Heart right ventricle (tissue), 16 donors: ENCODE measurements at regions of chr10 and their contacts with region 1.

Region 1: GRCh38 chr10:89481662-89482061 is 53.7 kb downstream of the SLC16A12 start:
- DNase-seq: no peak
- ATAC-seq: peak in 7 of 8 donors; percentile 30 to 75 (median 66)
- H3K4me3 ChIP-seq: no peak overlapping the region
- H3K27ac ChIP-seq: peak overlapping the region; percentile 19 to 86 (median 78)
- H3K4me1 ChIP-seq: peaks cover 18 to 69% (median 45%) of the 10 kb centered on the region in 9 donors
- H3K27me3 ChIP-seq: no peaks in the 10 kb centered on the region
- CTCF ChIP-seq: no peak

Region 2: GRCh38 chr10:89241486-89242344 is 239.9 kb before region 1 on chr10:
- intact Hi-C with region 1: no loop called
- DNase-seq: no peak
- ATAC-seq: peak in 5 of 8 donors; percentile 56 to 75 (median 69)
- H3K4me3 ChIP-seq: no peak overlapping the region
- H3K27ac ChIP-seq: peak overlapping the region in 3 of 10 donors; percentile 30 to 76 (median 41)
- H3K4me1 ChIP-seq: peaks cover 0 to 58% (median 23%) of the 10 kb centered on the region in 9 donors
- H3K27me3 ChIP-seq: no peaks in the 10 kb centered on the region
- CTCF ChIP-seq: no peak

Region 3: GRCh38 chr10:89426230-89426868 is 55.3 kb before region 1 on chr10:
- intact Hi-C with region 1: loop called in 2 of 10 experiments (anchors 5 kb)
- DNase-seq: peak in 1 of 2 donors; percentile 44
- ATAC-seq: peak; percentile 50 to 87 (median 78)
- H3K4me3 ChIP-seq: no peak overlapping the region
- H3K27ac ChIP-seq: no peak overlapping the region
- H3K4me1 ChIP-seq: peaks cover 0 to 36% (median 4%) of the 10 kb centered on the region in 9 donors
- H3K27me3 ChIP-seq: no peaks in the 10 kb centered on the region
- CTCF ChIP-seq: peak; percentile 76 to 90 (median 84)

Region 4: GRCh38 chr10:89431977-89432376 is 49.7 kb before region 1 on chr10:
- intact Hi-C with region 1: loop called in 2 of 10 experiments (anchors 5 kb)
- DNase-seq: no peak
- ATAC-seq: peak in 5 of 8 donors; percentile 23 to 74 (median 30)
- H3K4me3 ChIP-seq: peak overlapping the region in 1 of 10 donors; percentile 6
- H3K27ac ChIP-seq: peak overlapping the region in 5 of 10 donors; percentile 7 to 36 (median 22)
- H3K4me1 ChIP-seq: peaks cover 0 to 42% (median 6%) of the 10 kb centered on the region in 9 donors
- H3K27me3 ChIP-seq: peaks cover 0 to 4% (median 0%) of the 10 kb centered on the region in 7 donors
- CTCF ChIP-seq: no peak

Region 5: DNA sequence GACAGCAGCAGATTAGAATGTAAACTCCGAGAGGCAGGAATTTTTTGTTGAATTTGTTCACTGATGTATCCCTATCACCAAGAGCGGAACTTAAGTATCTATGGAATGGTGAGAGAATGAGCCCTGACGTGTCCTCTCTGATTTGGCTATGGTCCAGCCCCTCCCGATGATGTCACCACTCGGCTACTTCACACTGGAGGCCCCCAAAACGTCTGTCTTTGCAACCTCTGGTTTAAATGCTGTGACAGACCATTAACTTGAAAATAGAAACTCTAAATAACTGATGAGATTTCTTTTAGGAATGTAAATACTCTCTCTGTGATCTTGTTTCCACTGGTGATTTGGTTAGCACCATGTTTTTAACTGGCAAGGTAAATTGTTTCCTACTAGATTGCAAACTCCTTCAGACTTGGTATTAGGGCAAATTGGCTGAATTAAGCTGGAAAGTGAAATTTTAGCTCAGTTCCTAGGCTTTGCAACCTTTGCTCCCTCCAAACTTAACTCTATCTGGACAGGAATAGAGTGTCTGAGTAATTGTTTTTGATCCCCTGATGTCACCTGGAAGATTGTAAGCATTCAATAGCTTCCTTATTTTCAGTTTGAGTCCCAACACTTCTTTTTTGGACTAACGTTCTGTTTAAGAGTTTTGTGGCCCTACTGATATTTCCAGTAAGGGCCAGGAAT is 34.6 kb after region 1 on chr10:
- intact Hi-C with region 1: loop called in 4 of 10 experiments (anchors 5 kb)
- DNase-seq: peak; percentile 48 to 81
- ATAC-seq: peak; percentile 50 to 78 (median 62)
- H3K4me3 ChIP-seq: peak overlapping the region in 8 of 10 donors; percentile 8 to 35 (median 31)
- H3K27ac ChIP-seq: peak overlapping the region; percentile 57 to 92 (median 84)
- H3K4me1 ChIP-seq: peaks cover 4 to 67% (median 29%) of the 10 kb centered on the region in 9 donors
- H3K27me3 ChIP-seq: no peaks in the 10 kb centered on the region
- CTCF ChIP-seq: no peak

Region 6: DNA sequence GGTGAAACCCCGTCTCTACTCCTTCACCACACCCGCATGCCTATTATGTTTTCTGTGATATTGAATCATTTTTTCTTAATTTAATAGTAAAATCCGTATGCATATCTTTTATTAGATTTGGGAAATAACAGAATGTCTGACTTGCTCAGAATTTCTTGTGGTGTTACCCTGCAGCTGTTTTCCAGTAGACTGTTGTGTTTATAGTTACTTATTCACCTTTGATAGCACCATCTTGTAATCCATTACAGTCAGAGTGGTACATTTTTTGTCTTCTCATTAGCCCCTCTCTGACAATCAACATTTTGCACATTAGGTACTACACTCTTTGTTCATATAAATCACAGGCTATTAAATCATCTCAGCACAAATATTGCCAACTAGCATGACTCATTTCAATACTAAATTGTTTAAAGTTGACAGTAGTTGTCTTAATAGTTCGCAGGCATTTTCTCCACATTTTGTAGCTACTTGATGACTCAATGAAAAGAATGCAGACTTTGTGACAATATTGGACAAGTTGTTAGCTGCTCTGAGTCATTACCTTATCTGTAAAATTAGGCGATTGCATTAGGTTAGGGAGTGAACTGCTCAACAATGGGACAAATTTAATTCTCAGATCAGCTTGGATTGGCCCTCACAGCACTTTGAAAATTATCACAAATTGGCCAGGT is 71.5 kb after region 1 on chr10:
- intact Hi-C with region 1: loop called in 3 of 10 experiments (anchors 5 to 10 kb)
- DNase-seq: no peak
- ATAC-seq: peak in 5 of 8 donors; percentile 21 to 76 (median 38)
- H3K4me3 ChIP-seq: no peak overlapping the region
- H3K27ac ChIP-seq: no peak overlapping the region
- H3K4me1 ChIP-seq: peaks cover 0 to 18% (median 5%) of the 10 kb centered on the region in 9 donors
- H3K27me3 ChIP-seq: no peaks in the 10 kb centered on the region
- CTCF ChIP-seq: no peak